Panc1 (cell line): ENCODE measurements at regions of chr17 and their contacts with region 1.

Region 1: DNA sequence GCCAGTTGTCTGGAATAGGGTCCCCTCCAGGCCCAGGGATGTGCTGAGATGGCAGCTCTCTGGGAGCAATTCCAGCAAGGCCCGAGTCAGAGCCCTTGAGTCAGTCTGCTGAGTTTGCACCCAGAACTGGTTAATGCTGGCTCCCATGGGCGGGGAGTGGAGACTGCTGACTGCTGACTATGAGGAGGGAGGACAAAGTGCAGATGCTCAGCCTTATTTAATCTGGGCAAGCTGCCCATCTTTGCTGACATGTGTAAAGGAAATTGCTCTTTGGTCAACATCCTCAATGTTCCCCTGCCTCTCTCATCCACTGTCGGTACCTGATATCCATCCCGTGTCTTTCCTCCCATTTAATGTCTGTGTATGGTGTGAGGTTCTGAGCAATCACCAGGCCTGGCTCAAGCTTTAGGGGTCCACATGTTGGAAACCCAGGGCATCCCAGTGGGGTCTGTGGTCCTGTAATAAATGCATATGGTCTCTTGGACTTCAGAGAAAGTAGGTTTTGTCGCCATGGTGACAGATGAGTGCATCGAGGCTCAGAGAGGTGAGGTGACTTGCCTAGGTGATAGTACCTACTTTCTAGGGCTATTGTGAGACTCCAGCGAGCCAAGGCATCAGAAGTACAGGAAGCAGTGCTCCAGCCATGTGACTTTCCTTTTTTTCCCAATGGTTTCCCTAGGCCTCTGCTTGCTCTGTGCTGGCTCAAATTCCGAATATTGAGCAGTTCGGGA is 20.0 kb upstream of the RNF135 start:
- DNase-seq: no peak
- ATAC-seq: no peak
- H3K4me3 ChIP-seq: no peak overlapping the region
- H3K27ac ChIP-seq: no peak overlapping the region
- H3K4me1 ChIP-seq: no peaks in the 10 kb centered on the region
- H3K27me3 ChIP-seq: no peaks in the 10 kb centered on the region
- CTCF ChIP-seq: no peak

Region 2: GRCh38 chr17:30970831-30971567 is 20.2 kb after region 1 on chr17 and contains the start of gene RNF135:
- CTCF ChIA-PET with region 1: no interaction called
- POLR2A ChIA-PET with region 1: no interaction called
- in situ Hi-C with region 1: no loop called
- intact Hi-C with region 1: loop called (anchors 2 kb)
- DNase-seq: no peak
- ATAC-seq: peak; percentile 95
- H3K4me3 ChIP-seq: peak within 1 kb of the TSS; percentile 62 to 97
- H3K27ac ChIP-seq: peak within 1 kb of the TSS; percentile 96
- H3K4me1 ChIP-seq: peaks cover 14% of the 10 kb centered on the region; the same call in 1 of the 2 replicates
- H3K27me3 ChIP-seq: no peaks in the 10 kb centered on the region
- CTCF ChIP-seq: no peak
- total RNA-seq, gene RNF135: 41.8 TPM

Region 3: GRCh38 chr17:31068291-31068690 is 117.5 kb after region 1 on chr17:
- CTCF ChIA-PET with region 1: no interaction called
- POLR2A ChIA-PET with region 1: no interaction called
- in situ Hi-C with region 1: no loop called
- intact Hi-C with region 1: no loop called
- DNase-seq: no peak
- ATAC-seq: peak; percentile 33; the same call in 1 of the 2 replicates
- H3K4me3 ChIP-seq: no peak overlapping the region
- H3K27ac ChIP-seq: no peak overlapping the region
- H3K4me1 ChIP-seq: peaks cover 7% of the 10 kb centered on the region
- H3K27me3 ChIP-seq: no peaks in the 10 kb centered on the region
- CTCF ChIP-seq: peak; percentile 61